HepG2 (cell line): ENCODE measurements at regions of chr3 and their contacts with region 1.

Region 1: DNA sequence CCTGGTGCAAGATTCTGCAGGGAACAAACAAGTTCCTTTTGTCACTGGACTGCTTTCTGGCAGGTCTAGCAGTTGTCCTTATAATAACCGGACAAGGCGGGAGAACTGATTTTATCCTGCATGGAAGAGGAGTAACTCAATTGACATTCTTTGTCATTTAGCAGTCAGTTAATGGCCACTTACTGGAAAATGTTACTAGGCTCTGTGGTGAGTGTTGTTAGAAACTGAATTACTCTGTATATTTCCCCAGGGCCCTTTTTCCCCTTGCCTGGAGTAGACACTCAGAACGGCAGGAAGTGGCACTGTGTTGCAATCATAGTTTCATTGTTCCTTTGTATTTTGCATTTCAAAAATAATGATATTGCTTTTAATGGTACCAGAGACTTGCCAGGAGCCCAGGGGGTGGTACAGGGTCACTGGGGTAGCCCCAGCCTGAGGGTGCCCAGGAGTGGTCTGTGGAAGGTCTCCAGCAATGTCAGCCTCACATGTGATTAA is 318.6 kb upstream of the LRRFIP2 start:
- DNase-seq: no peak
- ATAC-seq: no peak
- H3K4me3 ChIP-seq: no peak overlapping the region
- H3K27ac ChIP-seq: no peak overlapping the region
- H3K4me1 ChIP-seq: no peaks in the 10 kb centered on the region
- H3K27me3 ChIP-seq: peaks cover 0 to 19% of the 10 kb centered on the region in 2 experiments; a peak in 3 of 5 replicates
- CTCF ChIP-seq: no peak
- EP300 ChIP-seq: no peak
- POLR2A ChIP-seq: no peak
- RAD21 ChIP-seq: no peak

Region 2: DNA sequence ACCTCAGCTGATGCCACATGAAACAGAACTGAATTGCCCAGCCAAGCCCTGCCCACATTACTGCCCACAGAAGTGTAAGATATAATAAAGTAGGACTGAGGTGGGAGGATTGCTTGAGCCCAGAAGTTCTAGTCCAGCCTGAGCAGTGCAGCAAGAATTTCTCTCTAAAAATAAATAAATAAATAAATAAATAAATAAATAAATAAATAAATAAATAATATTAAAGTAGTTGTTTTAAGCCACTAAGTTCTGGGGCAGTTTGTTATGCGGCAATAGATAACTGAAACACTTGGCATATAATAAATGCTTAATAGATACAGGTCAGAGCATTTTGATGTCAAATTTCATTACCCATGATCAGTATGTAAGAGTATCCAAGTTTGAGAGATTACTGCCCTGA is 69.2 kb before region 1 on chr3:
- CTCF ChIA-PET with region 1: no interaction called
- POLR2A ChIA-PET with region 1: no interaction called
- in situ Hi-C with region 1: no loop called
- intact Hi-C with region 1: no loop called
- DNase-seq: no peak
- ATAC-seq: no peak
- H3K4me3 ChIP-seq: no peak overlapping the region
- H3K27ac ChIP-seq: no peak overlapping the region
- H3K4me1 ChIP-seq: peaks cover 12% of the 10 kb centered on the region
- H3K27me3 ChIP-seq: no peaks in the 10 kb centered on the region
- CTCF ChIP-seq: no peak
- EP300 ChIP-seq: no peak
- POLR2A ChIP-seq: no peak
- RAD21 ChIP-seq: no peak

Region 3: DNA sequence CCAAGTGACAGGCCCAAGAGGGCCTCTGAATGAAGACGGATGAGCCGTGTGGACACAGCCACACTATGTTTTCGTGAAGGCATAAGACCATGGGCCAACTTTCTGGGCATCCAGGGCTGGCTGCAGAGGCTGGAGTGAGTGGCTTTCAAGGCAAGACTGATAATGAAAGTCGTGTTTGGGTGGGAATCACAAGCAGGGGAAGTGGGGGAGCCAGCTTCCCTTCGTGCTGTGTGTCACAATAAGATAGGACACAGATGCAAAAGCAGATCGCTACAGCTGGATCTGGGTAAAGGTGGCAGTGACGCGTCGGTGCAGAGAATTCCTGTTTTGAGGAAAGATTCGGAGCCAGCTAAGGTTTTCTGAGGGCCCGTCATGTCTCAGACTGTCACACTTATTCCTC is 58.8 kb after region 1 on chr3:
- CTCF ChIA-PET with region 1: no interaction called
- POLR2A ChIA-PET with region 1: no interaction called
- in situ Hi-C with region 1: no loop called
- intact Hi-C with region 1: no loop called
- DNase-seq: no peak
- ATAC-seq: no peak
- H3K4me3 ChIP-seq: no peak overlapping the region
- H3K27ac ChIP-seq: no peak overlapping the region
- H3K4me1 ChIP-seq: no peaks in the 10 kb centered on the region
- H3K27me3 ChIP-seq: no peaks in the 10 kb centered on the region; a peak in 1 of 5 replicates
- CTCF ChIP-seq: no peak
- EP300 ChIP-seq: no peak
- POLR2A ChIP-seq: no peak
- RAD21 ChIP-seq: no peak

Region 4: DNA sequence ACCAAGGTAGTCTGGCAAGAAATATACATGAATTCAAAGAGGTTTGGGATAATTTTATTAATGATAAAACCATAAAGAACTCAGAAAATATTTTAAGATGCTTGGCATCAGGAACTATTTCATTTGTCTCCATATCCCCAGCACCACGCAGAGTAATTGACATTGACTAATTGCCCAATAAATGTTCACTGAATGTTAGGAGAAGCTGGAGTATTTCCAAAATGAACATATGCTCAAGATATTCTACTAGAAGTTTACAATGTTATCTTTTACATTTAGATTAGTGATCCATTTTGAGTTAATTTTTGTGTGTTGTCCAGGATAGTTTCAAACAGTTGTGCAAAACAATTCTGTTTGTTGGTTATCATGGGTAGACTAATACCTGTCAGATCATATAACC is 69.9 kb after region 1 on chr3:
- CTCF ChIA-PET with region 1: no interaction called
- POLR2A ChIA-PET with region 1: no interaction called
- in situ Hi-C with region 1: no loop called
- intact Hi-C with region 1: loop called (anchors 2 kb)
- DNase-seq: no peak
- ATAC-seq: no peak
- H3K4me3 ChIP-seq: no peak overlapping the region
- H3K27ac ChIP-seq: no peak overlapping the region
- H3K4me1 ChIP-seq: no peaks in the 10 kb centered on the region
- H3K27me3 ChIP-seq: peaks cover 0 to 1% of the 10 kb centered on the region in 2 experiments; a peak in 1 of 5 replicates
- CTCF ChIP-seq: no peak
- EP300 ChIP-seq: no peak
- POLR2A ChIP-seq: no peak
- RAD21 ChIP-seq: no peak